GM10248 (cell line): ENCODE measurements at regions of chr10 and their contacts with region 1.

Region 1: DNA sequence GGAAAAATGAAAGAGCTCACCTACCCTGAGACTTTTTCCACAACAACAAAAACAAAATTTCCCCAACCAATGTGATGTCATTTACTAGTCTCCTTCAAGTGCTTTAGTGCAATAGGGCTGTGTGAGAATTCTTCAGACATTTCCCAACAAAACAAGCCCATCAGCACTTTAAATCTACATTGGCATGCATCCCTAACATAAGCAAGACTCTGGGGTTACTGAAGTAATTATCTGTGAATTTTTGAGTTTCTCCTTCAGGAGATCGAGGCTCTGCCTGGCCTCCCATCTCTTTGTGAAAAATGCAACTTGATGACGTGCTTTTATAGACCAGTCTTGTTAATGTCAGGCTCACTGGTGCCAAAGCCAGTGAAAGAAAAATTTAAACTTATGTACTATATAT is 255.6 kb downstream of the GFRA1 start:
- DNase-seq: no peak
- CTCF ChIP-seq: no peak

Region 2: GRCh38 chr10:115996031-115996430 is 21.4 kb before region 1 on chr10:
- CTCF ChIA-PET with region 1: no interaction called
- POLR2A ChIA-PET with region 1: no interaction called
- DNase-seq: no peak
- CTCF ChIP-seq: no peak

Region 3: DNA sequence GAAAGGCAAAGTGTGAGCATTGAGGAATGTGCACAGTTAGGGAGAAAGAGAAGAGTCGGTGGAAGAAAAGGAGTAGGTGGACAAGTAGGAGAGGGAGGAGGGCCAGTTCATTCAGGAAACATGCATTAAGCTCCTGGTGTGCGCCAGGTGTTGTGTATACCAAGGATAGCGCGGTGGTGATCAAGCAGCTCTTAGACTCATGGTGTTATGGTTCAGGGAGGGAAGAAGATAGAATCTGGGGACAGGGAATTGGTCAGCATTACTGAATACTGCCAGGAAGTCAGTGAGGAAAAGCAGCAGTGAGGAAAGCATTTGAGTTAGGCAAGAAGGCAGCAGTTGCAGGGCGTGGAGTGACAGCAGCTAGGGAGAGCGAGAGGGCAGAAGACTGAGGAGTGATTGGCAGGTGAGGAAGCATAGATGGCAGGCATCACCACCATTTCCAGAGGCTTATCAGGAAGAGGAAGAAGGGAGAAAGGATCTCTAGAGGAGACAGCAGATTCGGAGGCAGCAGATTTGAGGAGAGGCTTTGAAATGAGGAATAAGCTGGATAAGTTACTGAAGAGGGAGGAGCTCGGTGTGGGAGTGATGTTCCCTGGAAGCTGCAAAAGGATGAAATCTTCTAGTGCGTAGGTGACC is 10.0 kb before region 1 on chr10:
- CTCF ChIA-PET with region 1: interaction called, 17 read pairs
- POLR2A ChIA-PET with region 1: no interaction called
- DNase-seq: no peak
- CTCF ChIP-seq: no peak